ENCODE measurements at regions of chr2 and their contacts with region 1.

Region 1: GRCh38 chr2:177281400-177282180 is 17.1 kb upstream of the NFE2L2 start:
- DNase-seq: peak; percentile 64
- ATAC-seq: peak; percentile 76
- H3K4me3 ChIP-seq: no peak overlapping the region
- H3K27ac ChIP-seq: peak overlapping the region; percentile 78
- H3K4me1 ChIP-seq: peaks cover 20% of the 10 kb centered on the region
- H3K27me3 ChIP-seq: no peaks in the 10 kb centered on the region
- CTCF ChIP-seq: no peak
- EP300 ChIP-seq: no peak
- POLR2A ChIP-seq: no peak
- RAD21 ChIP-seq: no peak

Region 2: GRCh38 chr2:177118636-177119035 is 163.0 kb before region 1 on chr2:
- CTCF ChIA-PET with region 1: no interaction called
- POLR2A ChIA-PET with region 1: no interaction called
- RAD21 ChIA-PET with region 1: no interaction called
- SMC1A ChIA-PET with region 1: no interaction called
- in situ Hi-C with region 1: no loop called
- intact Hi-C with region 1: no loop called
- DNase-seq: no peak
- ATAC-seq: no peak
- H3K4me3 ChIP-seq: no peak overlapping the region
- H3K27ac ChIP-seq: no peak overlapping the region
- H3K4me1 ChIP-seq: no peaks in the 10 kb centered on the region
- H3K27me3 ChIP-seq: no peaks in the 10 kb centered on the region; a peak in 1 of 4 replicates
- CTCF ChIP-seq: no peak
- EP300 ChIP-seq: no peak
- POLR2A ChIP-seq: no peak
- RAD21 ChIP-seq: no peak

Region 3: GRCh38 chr2:177296040-177296439 is 14.4 kb after region 1 on chr2:
- CTCF ChIA-PET with region 1: interaction called, 57 read pairs
- POLR2A ChIA-PET with region 1: interaction called, 4 read pairs
- RAD21 ChIA-PET with region 1: interaction called, 3 read pairs
- SMC1A ChIA-PET with region 1: interaction called, 57 read pairs
- in situ Hi-C with region 1: no loop called
- intact Hi-C with region 1: no loop called
- DNase-seq: no peak
- ATAC-seq: peak; percentile 86
- H3K4me3 ChIP-seq: no peak overlapping the region
- H3K27ac ChIP-seq: no peak overlapping the region
- H3K4me1 ChIP-seq: peaks cover 5% of the 10 kb centered on the region; the same call in 1 of the 2 replicates
- H3K27me3 ChIP-seq: no peaks in the 10 kb centered on the region
- CTCF ChIP-seq: peak in 2 of 3 experiments; percentile 36 to 48; a peak in 2 of 6 replicates
- EP300 ChIP-seq: no peak
- POLR2A ChIP-seq: no peak
- RAD21 ChIP-seq: peak; percentile 45